ENCODE measurements at regions of chr3 and their contacts with region 1.

Region 1: GRCh38 chr3:73461547-73461946 is 163.2 kb downstream of the PDZRN3 start:
- DNase-seq: no peak
- H3K4me3 ChIP-seq: no peak overlapping the region
- H3K27ac ChIP-seq: peak overlapping the region in 1 of 4 donors; percentile 3
- H3K4me1 ChIP-seq: peaks cover 9 to 51% (median 44%) of the 10 kb centered on the region in 4 donors
- H3K27me3 ChIP-seq: no peaks in the 10 kb centered on the region
- CTCF ChIP-seq: no peak
- EP300 ChIP-seq: no peak
- POLR2A ChIP-seq: no peak

Region 2: GRCh38 chr3:72847751-72848702 is 613.5 kb before region 1 on chr3 and contains the start of gene SHQ1:
- intact Hi-C with region 1: no loop called
- DNase-seq: peak; percentile 98
- H3K4me3 ChIP-seq: peak within 1 kb of the TSS; percentile 75 to 92 (median 78)
- H3K27ac ChIP-seq: peak within 1 kb of the TSS; percentile 75 to 87 (median 82)
- H3K4me1 ChIP-seq: peaks cover 17 to 43% (median 31%) of the 10 kb centered on the region in 4 donors
- H3K27me3 ChIP-seq: no peaks in the 10 kb centered on the region
- CTCF ChIP-seq: no peak
- EP300 ChIP-seq: no peak
- POLR2A ChIP-seq: no peak
- total RNA-seq, gene SHQ1: 8.7 to 19.9 (median 12.4) TPM

Region 3: GRCh38 chr3:73324203-73325155 is 137.1 kb before region 1 on chr3:
- intact Hi-C with region 1: no loop called
- DNase-seq: no peak
- H3K4me3 ChIP-seq: no peak overlapping the region
- H3K27ac ChIP-seq: no peak overlapping the region
- H3K4me1 ChIP-seq: peaks cover 0 to 12% (median 2%) of the 10 kb centered on the region in 4 donors
- H3K27me3 ChIP-seq: no peaks in the 10 kb centered on the region
- CTCF ChIP-seq: no peak
- EP300 ChIP-seq: no peak
- POLR2A ChIP-seq: no peak

Region 4: GRCh38 chr3:73451306-73451944 is 10.1 kb before region 1 on chr3:
- intact Hi-C with region 1: loop called (anchors 1 kb)
- DNase-seq: no peak
- H3K4me3 ChIP-seq: no peak overlapping the region
- H3K27ac ChIP-seq: no peak overlapping the region
- H3K4me1 ChIP-seq: peaks cover 43 to 93% (median 80%) of the 10 kb centered on the region in 4 donors
- H3K27me3 ChIP-seq: no peaks in the 10 kb centered on the region
- CTCF ChIP-seq: no peak
- EP300 ChIP-seq: no peak
- POLR2A ChIP-seq: no peak

Region 5: DNA sequence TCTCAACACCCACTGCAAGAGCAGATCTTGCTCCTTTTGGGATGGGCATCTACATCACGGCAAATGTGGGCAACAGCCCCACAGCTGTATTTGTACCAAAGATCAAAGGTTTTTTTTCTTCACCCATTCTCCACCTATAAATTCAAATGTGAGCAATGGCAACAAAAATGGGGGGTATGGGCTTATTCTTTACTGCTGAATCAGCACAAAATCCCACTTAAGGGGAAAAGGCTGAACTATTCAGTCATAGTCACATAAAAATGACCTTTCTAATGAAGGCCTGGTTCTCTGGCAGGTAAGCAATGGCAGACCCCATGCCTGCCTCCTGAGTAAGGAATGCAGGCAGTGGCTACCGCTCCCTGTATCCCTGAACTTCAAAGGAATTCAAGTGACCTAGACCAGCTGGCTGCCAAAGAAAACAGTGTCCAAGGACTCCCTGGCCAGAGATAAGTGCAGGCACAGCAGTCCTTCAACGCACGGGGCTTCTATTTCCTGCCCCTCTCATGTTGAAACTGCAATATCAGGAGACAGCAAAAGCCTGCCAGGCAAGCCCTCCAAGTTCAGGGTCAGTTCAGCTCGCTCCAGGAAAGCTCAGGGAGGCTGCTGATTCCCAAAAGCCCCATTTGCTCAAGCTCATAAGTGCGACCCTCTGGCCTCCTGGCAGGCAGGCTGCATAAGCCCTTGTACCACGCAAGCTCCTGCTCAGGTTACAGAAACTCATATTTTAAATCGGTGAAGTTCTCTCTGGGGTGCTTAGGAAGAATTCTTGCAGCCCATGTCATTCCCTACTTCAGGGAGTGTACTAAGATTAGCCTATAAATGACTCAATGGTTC is 29.1 kb after region 1 on chr3:
- intact Hi-C with region 1: loop called (anchors 5 kb)
- DNase-seq: peak; percentile 90
- H3K4me3 ChIP-seq: no peak overlapping the region
- H3K27ac ChIP-seq: no peak overlapping the region
- H3K4me1 ChIP-seq: peaks cover 65 to 94% (median 84%) of the 10 kb centered on the region in 4 donors
- H3K27me3 ChIP-seq: no peaks in the 10 kb centered on the region
- CTCF ChIP-seq: no peak
- EP300 ChIP-seq: no peak
- POLR2A ChIP-seq: no peak

Region 6: GRCh38 chr3:74314696-74315095 is 853.1 kb after region 1 on chr3:
- intact Hi-C with region 1: no loop called
- DNase-seq: no peak
- H3K4me3 ChIP-seq: no peak overlapping the region
- H3K27ac ChIP-seq: no peak overlapping the region
- H3K4me1 ChIP-seq: no peaks in the 10 kb centered on the region
- H3K27me3 ChIP-seq: no peaks in the 10 kb centered on the region
- CTCF ChIP-seq: no peak
- EP300 ChIP-seq: no peak
- POLR2A ChIP-seq: no peak